ENCODE measurements at regions of chr16 and their contacts with region 1.

Region 1: GRCh38 chr16:72530444-72530843 is 358.5 kb upstream of the PMFBP1 start:
- DNase-seq: peak; percentile 82
- H3K4me3 ChIP-seq: no peak overlapping the region
- H3K27ac ChIP-seq: peak overlapping the region; percentile 68
- H3K4me1 ChIP-seq: peaks cover 11% of the 10 kb centered on the region
- H3K27me3 ChIP-seq: no peaks in the 10 kb centered on the region
- CTCF ChIP-seq: peak; percentile 35 to 46
- POLR2A ChIP-seq: no peak

Region 2: DNA sequence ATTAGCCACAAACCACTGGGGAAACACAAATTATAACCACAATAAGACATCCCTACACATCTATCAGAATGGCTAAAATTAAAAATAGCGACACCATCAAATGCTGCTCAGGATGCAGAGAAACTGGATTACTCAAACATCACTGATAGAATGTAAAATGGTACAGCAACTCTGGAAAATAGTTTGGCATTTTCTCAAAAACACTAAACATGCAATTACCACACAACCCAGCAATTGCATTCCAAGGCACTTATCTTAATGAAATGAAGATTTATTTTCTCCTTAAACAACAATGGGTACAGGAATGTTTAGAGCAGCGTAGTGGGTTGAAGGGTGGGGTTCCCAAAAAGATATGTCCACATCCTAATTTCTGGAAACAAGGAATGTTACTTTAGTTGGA is 49.5 kb before region 1 on chr16:
- CTCF ChIA-PET with region 1: no interaction called
- POLR2A ChIA-PET with region 1: no interaction called
- dilution Hi-C with region 1: no loop called
- intact Hi-C with region 1: no loop called
- DNase-seq: peak; percentile 29
- H3K4me3 ChIP-seq: no peak overlapping the region
- H3K27ac ChIP-seq: peak overlapping the region; percentile 55
- H3K4me1 ChIP-seq: peaks cover 27% of the 10 kb centered on the region
- H3K27me3 ChIP-seq: no peaks in the 10 kb centered on the region
- CTCF ChIP-seq: no peak
- POLR2A ChIP-seq: no peak

Region 3: GRCh38 chr16:72493716-72494415 is 36.6 kb before region 1 on chr16:
- CTCF ChIA-PET with region 1: no interaction called
- POLR2A ChIA-PET with region 1: no interaction called
- dilution Hi-C with region 1: no loop called
- intact Hi-C with region 1: no loop called
- DNase-seq: no peak
- H3K4me3 ChIP-seq: no peak overlapping the region
- H3K27ac ChIP-seq: no peak overlapping the region
- H3K4me1 ChIP-seq: no peaks in the 10 kb centered on the region
- H3K27me3 ChIP-seq: no peaks in the 10 kb centered on the region
- CTCF ChIP-seq: no peak
- POLR2A ChIP-seq: no peak

Region 4: GRCh38 chr16:72517154-72517553 is 13.3 kb before region 1 on chr16:
- CTCF ChIA-PET with region 1: no interaction called
- POLR2A ChIA-PET with region 1: no interaction called
- dilution Hi-C with region 1: no loop called
- intact Hi-C with region 1: no loop called
- DNase-seq: no peak
- H3K4me3 ChIP-seq: no peak overlapping the region
- H3K27ac ChIP-seq: no peak overlapping the region
- H3K4me1 ChIP-seq: no peaks in the 10 kb centered on the region
- H3K27me3 ChIP-seq: no peaks in the 10 kb centered on the region
- CTCF ChIP-seq: no peak
- POLR2A ChIP-seq: no peak

Region 5: DNA sequence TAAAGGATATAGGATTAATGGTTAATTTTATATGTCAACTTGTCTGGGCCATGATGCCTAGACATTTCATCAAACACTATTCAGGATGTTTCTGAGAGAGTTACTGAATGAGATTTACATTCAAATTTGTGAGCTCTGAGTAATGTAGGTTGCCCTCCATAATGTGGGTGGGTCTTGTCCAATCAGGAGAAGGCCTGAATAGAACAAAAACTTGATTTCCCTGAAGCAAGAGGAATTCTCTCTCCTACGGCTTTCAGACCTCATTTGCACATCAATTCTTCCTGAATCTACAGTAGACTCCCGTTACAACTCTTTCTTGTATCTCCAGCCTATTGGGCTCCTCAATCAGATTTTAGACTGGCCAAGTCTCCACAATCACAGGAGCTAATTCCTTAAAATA is 19.4 kb after region 1 on chr16:
- CTCF ChIA-PET with region 1: no interaction called
- POLR2A ChIA-PET with region 1: no interaction called
- dilution Hi-C with region 1: no loop called
- intact Hi-C with region 1: no loop called
- DNase-seq: no peak
- H3K4me3 ChIP-seq: no peak overlapping the region
- H3K27ac ChIP-seq: no peak overlapping the region
- H3K4me1 ChIP-seq: no peaks in the 10 kb centered on the region
- H3K27me3 ChIP-seq: no peaks in the 10 kb centered on the region
- CTCF ChIP-seq: no peak
- POLR2A ChIP-seq: no peak

Region 6: DNA sequence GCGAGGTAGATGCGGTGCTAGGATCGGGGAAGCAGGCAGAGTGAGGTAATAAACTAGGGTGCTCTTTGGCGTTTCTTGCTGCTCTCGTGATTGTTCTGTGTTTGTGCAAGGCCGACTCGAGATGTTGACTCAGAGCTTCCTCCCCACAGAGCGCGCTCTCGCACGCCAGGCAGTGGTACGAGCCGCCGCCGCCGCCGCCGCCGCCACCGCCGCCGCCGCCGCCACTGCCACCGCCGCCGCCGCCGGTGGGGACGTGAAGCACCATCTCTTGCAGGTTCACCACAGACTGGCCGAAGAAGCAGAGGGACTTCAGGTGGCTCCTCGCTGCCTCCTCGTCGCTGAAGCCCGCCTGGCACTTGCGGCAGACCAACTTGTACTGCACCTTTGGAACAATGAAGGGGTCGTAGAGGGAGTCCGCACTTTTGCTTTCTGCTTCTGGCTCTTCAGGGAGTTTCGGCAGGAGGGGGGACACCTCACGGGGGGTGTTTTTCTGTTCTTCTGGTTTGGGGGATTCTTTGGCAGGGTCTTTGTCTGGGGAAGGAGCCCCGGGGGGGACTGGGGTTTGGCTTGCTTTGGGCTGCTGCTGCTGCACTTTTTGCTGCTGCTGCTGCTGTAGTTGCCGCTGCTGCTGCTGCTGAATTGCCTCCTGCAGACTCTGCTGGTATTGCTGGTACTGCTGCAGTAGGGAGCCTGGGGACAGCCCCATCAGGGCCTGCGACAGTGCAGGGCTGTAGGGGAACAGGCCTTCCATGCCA is 257.2 kb after region 1 on chr16:
- CTCF ChIA-PET with region 1: no interaction called
- POLR2A ChIA-PET with region 1: no interaction called
- dilution Hi-C with region 1: no loop called
- intact Hi-C with region 1: loop called (anchors 5 kb)
- DNase-seq: peak; percentile 86
- H3K4me3 ChIP-seq: peak overlapping the region; percentile 27 to 57 (median 55)
- H3K27ac ChIP-seq: peak overlapping the region; percentile 95
- H3K4me1 ChIP-seq: peaks cover 7% of the 10 kb centered on the region
- H3K27me3 ChIP-seq: no peaks in the 10 kb centered on the region
- CTCF ChIP-seq: no peak
- POLR2A ChIP-seq: no peak

Measured in endothelial cell of umbilical vein (primary cell).